ENCODE measurements at regions of chr18 and their contacts with region 1.

Region 1: DNA sequence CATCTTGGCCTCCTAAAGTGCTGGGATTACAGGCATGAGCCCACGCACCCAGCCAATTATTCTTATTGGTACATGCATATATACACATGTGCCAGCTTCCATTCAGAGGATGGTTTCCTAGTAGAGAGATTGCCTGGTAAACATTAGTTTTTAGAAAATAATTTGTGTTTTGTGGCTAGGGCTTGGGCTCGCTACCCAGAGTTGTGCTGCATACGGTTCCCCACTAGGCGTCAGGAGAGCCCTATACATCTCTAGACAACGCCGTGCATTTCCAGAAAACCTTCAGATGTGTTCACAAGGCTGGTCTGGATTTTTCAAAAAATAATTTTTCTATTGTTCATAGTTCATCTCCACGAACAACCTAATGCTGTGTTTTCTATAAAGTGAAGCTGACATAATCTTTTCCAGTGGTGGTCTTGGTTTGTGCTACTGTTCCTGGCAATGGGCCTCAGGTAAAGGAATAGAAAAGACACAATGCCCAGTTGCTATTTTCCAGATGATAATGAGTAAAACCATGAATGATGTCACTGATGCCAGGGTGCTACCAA is 14.7 kb upstream of the AFG3L2 start:
- DNase-seq: peak; percentile 42
- H3K4me3 ChIP-seq: no peak overlapping the region
- H3K27ac ChIP-seq: no peak overlapping the region
- H3K27me3 ChIP-seq: no peaks in the 10 kb centered on the region
- CTCF ChIP-seq: peak; percentile 100

Region 2: DNA sequence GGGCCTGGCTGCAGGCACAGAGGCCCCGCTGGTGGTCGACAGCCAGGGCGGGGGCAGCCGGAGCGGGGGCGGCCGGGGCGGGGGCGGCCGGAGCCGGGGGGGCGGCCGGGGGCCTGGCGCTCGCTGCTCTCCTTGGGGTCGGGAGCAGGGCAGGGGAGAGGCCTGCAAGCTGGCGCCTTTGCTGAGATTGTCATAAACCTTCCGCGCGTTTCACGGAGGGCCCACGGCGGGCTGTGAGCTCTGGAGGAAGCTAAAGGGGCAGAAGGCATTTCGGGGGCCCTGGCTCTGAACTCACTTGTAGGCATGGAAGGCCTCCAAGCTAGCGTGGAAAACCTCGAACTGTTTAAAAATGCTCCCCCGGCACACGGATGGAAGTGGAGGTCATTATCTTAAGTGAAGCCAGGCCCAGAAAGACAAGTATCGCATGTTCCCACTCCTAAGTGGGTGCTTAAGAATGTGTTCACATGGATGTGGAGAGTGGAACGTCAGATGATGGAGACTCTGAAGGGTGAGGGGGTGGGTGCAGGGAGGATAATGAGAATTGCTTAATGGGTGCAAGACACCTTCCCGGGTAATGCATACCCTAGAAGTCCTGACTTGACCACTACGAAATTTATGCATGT is 16.7 kb after region 1 on chr18:
- CTCF ChIA-PET with region 1: interaction called, 63 read pairs
- POLR2A ChIA-PET with region 1: no interaction called
- DNase-seq: no peak
- H3K4me3 ChIP-seq: peak overlapping the region; percentile 63
- H3K27ac ChIP-seq: peak overlapping the region; percentile 49
- H3K27me3 ChIP-seq: no peaks in the 10 kb centered on the region
- CTCF ChIP-seq: no peak

Region 3: GRCh38 chr18:12645254-12646203 is 253.8 kb after region 1 on chr18:
- CTCF ChIA-PET with region 1: interaction called, 15 read pairs
- POLR2A ChIA-PET with region 1: no interaction called
- DNase-seq: no peak
- H3K4me3 ChIP-seq: no peak overlapping the region
- H3K27ac ChIP-seq: peak overlapping the region; percentile 21
- H3K27me3 ChIP-seq: no peaks in the 10 kb centered on the region
- CTCF ChIP-seq: no peak

Region 4: GRCh38 chr18:12668041-12668440 is 276.3 kb after region 1 on chr18:
- CTCF ChIA-PET with region 1: interaction called, 179 read pairs
- POLR2A ChIA-PET with region 1: no interaction called
- DNase-seq: no peak
- H3K4me3 ChIP-seq: no peak overlapping the region
- H3K27ac ChIP-seq: no peak overlapping the region
- H3K27me3 ChIP-seq: no peaks in the 10 kb centered on the region
- CTCF ChIP-seq: no peak

Region 5: DNA sequence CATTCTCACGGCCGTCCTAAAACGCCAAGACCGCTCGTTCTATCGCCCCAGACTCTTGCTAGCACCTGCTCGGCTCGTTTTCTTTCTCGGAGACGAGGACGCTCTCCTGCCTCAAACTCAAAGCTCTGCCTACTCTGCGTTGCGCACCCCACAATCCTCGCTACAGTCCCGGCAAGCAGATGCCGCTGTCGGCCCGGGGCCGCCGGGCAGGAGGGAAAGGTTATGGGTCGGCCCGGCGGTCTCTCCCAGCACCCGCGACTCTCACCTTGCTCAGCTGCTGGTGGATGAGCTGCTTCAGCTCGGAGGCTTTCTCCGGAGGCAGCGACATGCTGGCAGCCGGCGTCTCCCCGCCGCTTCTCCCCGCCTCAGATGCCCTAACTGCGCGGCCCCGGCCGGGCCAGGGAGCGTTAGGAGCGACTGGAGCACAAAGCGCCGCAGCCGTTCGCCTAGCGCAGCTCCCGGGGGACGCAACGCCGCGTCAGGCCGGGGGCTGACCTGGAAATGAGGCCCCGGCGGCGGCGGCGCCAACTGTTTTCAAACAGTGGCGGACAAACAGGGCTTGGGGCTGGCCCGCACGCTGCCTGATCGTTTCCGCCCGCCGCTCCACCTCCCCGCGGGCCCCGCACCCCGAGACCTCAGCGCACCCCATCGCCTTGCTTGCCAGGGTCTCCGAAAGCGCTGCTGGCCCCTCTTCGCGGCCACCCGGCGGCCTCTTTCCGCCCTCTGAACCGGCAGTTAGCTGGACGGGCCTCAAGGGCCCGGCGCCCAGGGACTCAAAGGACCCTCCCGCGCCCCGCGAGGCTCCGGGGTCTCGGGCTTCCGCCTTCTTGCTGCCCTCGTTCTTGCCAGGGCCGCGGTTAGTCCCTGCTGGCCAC is 310.8 kb after region 1 on chr18 and contains the starts of genes CEP76 and PSMG2:
- CTCF ChIA-PET with region 1: interaction called, 11 read pairs
- POLR2A ChIA-PET with region 1: no interaction called
- DNase-seq: peak; percentile 46
- H3K4me3 ChIP-seq: peak within 1 kb of the TSS; percentile 90
- H3K27ac ChIP-seq: peak within 1 kb of the TSS; percentile 93
- H3K27me3 ChIP-seq: no peaks in the 10 kb centered on the region
- CTCF ChIP-seq: no peak
- polyA plus RNA-seq, gene CEP76: 5.6 and 7.6 TPM in 2 replicates
- polyA plus RNA-seq, gene PSMG2: 79.4 and 96.2 TPM in 2 replicates